ENCODE measurements at regions of chr2 and their contacts with region 1.

Region 1: GRCh38 chr2:218269899-218270720 is at the starts of genes AAMP and PNKD:
- DNase-seq: peak; percentile 100
- H3K4me3 Mint-ChIP-seq: peak within 1 kb of the TSS; percentile 97
- H3K27ac Mint-ChIP-seq: peak within 1 kb of the TSS; percentile 88
- H3K4me1 Mint-ChIP-seq: peaks cover 42% of the 10 kb centered on the region
- H3K27me3 Mint-ChIP-seq: no peaks in the 10 kb centered on the region
- CTCF ChIP-seq: no peak
- total RNA-seq, gene AAMP: 95.7 and 98.7 TPM in 2 replicates
- total RNA-seq, gene PNKD: 13.0 and 23.1 TPM in 2 replicates

Region 2: DNA sequence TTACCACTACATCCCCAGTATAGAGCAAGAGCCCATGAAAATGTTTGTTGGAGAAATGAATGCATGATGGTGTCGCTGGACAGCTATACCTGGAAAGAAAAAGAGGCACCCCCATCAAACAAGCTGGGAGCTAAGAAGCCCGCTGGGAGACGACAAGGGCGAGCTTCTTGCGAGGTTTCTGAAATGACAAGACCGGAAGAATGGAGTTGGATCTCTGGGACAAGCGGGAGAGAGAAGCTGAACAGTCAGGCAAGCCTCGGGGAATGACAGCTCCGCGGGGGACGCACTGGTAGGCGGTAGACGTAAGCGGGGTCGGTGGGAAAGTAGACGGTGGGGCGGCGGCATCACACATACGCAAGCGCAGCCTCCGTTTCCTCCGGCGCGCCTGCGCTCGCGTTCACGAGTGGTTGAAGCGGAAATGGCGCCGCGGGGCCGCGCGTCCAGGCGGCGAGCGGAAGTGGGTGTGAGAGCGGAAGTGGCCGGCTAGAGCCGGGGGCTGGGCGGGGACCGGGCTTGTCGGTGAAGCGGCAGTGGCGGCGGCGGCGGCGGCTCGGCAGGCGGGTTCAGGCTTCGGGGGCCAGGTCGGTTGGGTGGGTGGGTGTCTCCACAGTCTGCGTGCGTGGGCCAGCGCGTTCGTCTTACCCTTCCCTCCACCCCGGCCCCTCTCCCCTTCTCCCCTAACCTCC is 53.3 kb before region 1 on chr2 and contains the start of gene ARPC2:
- CTCF ChIA-PET with region 1: interaction called, 5 read pairs
- POLR2A ChIA-PET with region 1: interaction called, 27 read pairs
- intact Hi-C with region 1: no loop called
- DNase-seq: peak; percentile 90
- H3K4me3 Mint-ChIP-seq: peak within 1 kb of the TSS; percentile 95
- H3K27ac Mint-ChIP-seq: peak within 1 kb of the TSS; percentile 99
- H3K4me1 Mint-ChIP-seq: peaks cover 36% of the 10 kb centered on the region
- H3K27me3 Mint-ChIP-seq: no peaks in the 10 kb centered on the region
- CTCF ChIP-seq: no peak
- total RNA-seq, gene ARPC2: 196 and 284 TPM in 2 replicates

Region 3: DNA sequence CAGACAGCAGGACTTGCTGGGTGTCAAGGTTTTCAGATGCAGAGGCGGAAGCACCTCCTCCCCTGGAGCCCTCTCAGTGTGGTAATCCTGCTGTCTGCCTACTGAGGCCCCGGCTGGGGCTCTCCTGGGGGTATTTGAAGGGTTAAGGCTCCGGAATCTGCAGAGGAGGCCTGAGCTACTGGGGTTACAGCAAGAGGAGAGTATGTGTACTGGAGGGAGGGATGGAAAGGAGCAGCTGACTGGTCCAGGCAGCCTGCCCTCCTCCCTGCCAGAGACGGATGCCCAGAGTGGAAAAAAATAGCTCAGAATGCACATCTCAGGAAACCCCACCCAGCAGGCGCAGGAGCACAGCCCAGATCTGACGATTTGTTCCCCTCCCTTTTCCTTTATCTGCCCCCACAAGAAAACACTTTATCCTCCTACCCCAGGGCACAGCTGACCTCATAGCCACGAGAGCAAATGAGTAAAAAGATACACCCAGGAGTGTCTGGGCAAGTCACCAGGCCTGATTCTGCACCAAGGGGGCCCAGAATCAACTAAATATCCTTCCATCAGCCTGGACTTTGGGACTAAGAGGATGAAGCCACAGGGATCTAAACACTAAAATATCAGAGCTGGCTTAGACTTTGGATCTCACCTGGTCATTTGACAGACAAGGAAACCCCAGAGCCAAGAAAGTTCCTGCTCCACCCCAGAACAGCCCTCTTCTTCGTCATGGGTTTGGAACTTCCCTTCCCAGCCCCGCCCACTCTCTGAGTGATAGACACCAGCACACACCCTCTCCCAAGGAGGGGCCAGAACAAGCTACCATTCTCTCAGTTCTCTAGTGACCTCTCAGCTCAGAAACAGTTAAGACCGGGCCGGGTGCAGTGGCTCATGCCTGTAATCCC is 16.7 kb after region 1 on chr2:
- CTCF ChIA-PET with region 1: interaction called, 215 read pairs
- POLR2A ChIA-PET with region 1: interaction called, 390 read pairs
- intact Hi-C with region 1: loop called (anchors 1 kb)
- DNase-seq: peak; percentile 97
- H3K4me3 Mint-ChIP-seq: peak overlapping the region; percentile 80
- H3K27ac Mint-ChIP-seq: peak overlapping the region; percentile 99
- H3K4me1 Mint-ChIP-seq: peaks cover 57% of the 10 kb centered on the region
- H3K27me3 Mint-ChIP-seq: no peaks in the 10 kb centered on the region
- CTCF ChIP-seq: no peak

Region 4: DNA sequence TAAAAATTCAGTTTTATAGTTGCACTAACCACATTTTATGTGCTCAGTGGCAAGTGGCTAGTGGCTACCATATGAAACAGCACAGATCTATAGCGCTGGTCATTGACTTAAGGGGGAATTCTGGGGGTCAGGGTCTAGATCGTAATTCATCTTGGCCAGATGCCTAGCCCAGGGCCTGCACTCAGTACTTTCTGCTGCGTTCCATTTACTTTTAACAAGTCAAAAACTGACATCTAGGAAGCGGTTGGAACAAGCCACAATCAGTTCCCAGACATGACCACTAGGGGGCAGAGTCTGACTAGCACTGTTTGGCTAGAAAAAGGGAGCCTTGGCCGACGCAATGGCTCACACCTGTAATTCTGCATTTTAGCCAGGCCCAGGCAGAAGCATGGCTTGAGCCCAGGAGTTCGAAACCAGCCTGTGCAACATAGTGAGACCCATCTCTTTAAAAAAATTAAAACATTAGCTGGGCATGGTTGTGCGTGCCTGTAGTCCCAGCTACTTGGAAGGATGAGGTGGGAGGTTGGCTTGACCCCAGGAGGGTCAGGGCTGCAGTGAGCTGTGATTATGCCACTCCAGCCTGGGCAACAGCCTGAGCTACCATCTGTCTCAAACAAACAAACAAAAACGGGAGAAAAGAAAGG is 31.2 kb after region 1 on chr2:
- CTCF ChIA-PET with region 1: interaction called, 215 read pairs
- POLR2A ChIA-PET with region 1: interaction called, 71 read pairs
- intact Hi-C with region 1: loop called (anchors 1 kb)
- DNase-seq: peak; percentile 90
- H3K4me3 Mint-ChIP-seq: no peak overlapping the region
- H3K27ac Mint-ChIP-seq: no peak overlapping the region
- H3K4me1 Mint-ChIP-seq: peaks cover 16% of the 10 kb centered on the region
- H3K27me3 Mint-ChIP-seq: no peaks in the 10 kb centered on the region
- CTCF ChIP-seq: peak; percentile 91

Region 5: DNA sequence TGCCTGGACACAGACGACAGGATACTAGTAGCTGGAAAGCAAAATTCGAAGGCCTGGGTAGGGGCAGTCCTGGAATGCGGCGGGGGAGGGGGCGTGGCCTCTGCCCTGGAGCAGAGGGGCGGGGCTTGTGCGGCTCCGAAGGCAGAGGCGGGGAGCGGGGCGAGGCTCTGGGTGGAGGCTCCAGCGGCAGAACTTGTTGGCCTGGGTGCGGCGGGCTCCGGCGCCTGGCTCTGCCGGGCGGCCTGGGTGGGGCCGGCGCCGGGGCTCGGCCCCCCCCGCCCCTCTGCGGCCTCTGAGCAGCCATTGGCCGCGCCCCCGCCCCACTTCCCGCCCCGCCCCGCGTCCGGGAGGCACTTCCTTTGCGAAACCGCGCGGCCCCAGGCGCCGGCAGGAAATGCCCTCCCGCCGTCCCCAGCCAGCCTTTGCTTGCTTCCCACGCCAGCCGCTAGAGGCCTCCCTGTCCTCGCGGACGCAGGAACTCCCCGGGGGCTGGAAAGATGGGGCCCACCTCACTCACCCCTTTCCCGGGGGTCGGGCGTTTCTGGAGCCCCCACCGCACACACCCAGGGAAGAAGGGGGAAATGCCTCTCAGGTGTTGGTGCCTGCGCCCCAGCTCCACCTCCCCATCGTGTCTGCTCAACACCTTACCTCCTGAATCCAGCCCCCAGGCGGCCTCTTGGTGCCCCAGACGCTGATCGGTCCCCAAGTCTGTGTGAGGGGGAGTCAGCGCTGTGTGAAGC is 136.3 kb after region 1 on chr2:
- CTCF ChIA-PET with region 1: interaction called, 9 read pairs
- POLR2A ChIA-PET with region 1: interaction called, 17 read pairs
- intact Hi-C with region 1: no loop called
- DNase-seq: peak; percentile 94
- H3K4me3 Mint-ChIP-seq: peak overlapping the region; percentile 67
- H3K27ac Mint-ChIP-seq: peak overlapping the region; percentile 82
- H3K4me1 Mint-ChIP-seq: peaks cover 17% of the 10 kb centered on the region
- H3K27me3 Mint-ChIP-seq: no peaks in the 10 kb centered on the region
- CTCF ChIP-seq: peak; percentile 82

Measured in MCF 10A (cell line).